GM18951 (cell line): ENCODE measurements at regions of chr6 and their contacts with region 1.

Region 1: GRCh38 chr6:46090115-46091079 is 39.4 kb upstream of the ENPP4 start:
- POLR2A ChIP-seq: no peak

Region 2: DNA sequence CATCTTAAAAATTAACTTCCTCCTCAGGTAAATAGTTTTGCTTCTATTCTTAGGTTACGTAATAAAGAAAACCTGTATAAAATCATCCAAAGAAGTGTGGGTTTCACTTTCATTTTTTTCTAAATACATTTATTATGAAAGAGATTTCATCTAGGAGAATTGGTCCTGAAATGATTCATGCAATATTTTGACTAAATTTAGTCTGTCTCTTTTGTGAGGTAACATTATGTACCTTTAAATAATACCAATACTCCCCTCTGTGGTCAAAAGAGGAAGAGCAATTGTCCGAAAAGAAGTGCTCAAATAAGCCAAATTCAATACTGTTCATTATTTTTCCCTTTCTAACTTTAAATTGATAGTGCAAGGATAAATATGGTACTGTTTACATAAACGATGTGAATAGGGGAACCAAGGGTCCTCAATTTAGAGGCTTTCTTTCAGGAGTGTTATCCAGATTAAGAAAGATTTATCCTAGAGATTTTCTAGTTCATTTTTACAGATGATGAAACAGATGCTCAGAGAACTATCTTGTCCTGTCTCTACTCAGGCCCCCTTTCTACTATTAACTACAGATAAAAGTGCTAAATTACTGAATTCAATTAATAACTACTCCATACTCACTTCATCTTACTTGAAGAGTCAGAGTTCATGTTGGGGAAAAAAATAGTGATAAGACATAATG is 536.0 kb after region 1 on chr6:
- in situ Hi-C with region 1: loop called (anchors 25 kb)
- POLR2A ChIP-seq: no peak